Activated CD4-positive, alpha-beta memory T cell treated with anti-CD3 and anti-CD28 coated beads for 36 hours (primary cell): ENCODE measurements at regions of chr7 and their contacts with region 1.

Region 1: DNA sequence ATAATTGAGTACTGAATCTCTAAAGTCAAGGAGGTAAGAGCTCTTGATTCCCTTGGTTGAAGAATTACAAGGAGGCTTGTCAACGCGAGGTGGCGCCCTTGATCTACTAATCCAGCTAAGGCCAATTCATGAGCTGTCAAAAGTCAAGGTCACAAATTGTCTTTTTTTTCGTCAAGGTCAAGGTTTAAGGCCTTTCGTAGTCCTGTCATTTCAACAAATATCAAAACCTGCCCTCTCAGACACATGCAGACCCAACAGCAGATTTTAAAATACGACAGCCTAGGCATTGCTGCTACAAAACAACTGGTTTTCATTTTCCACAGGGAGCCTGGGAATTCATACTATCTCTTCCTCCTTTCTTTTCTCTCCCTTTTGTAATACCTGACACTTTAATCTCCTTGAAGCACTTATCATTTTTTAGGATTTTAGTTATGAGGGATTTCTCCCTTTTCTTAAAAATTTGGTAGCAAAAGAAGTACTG is 3.6 kb downstream of the HOXA13 start:
- DNase-seq: peak; percentile 88
- H3K4me3 Mint-ChIP-seq: peak overlapping the region; percentile 26
- H3K27ac Mint-ChIP-seq: no peak overlapping the region
- H3K4me1 Mint-ChIP-seq: peaks cover 30% of the 10 kb centered on the region
- H3K27me3 Mint-ChIP-seq: peaks cover 71% of the 10 kb centered on the region

Region 2: GRCh38 chr7:27080844-27081436 is 115.4 kb before region 1 on chr7:
- CTCF ChIA-PET with region 1: no interaction called
- POLR2A ChIA-PET with region 1: no interaction called
- intact Hi-C with region 1: no loop called
- DNase-seq: no peak
- H3K4me3 Mint-ChIP-seq: no peak overlapping the region
- H3K27ac Mint-ChIP-seq: no peak overlapping the region
- H3K4me1 Mint-ChIP-seq: no peaks in the 10 kb centered on the region
- H3K27me3 Mint-ChIP-seq: peaks cover 4% of the 10 kb centered on the region

Region 3: GRCh38 chr7:27166531-27167505 is 29.5 kb before region 1 on chr7:
- CTCF ChIA-PET with region 1: interaction called, 11 read pairs
- POLR2A ChIA-PET with region 1: no interaction called
- intact Hi-C with region 1: loop called (anchors 2 kb)
- DNase-seq: no peak
- H3K4me3 Mint-ChIP-seq: peak overlapping the region; percentile 47
- H3K27ac Mint-ChIP-seq: peak overlapping the region; percentile 16
- H3K4me1 Mint-ChIP-seq: peaks cover 27% of the 10 kb centered on the region
- H3K27me3 Mint-ChIP-seq: peaks cover 79% of the 10 kb centered on the region

Region 4: DNA sequence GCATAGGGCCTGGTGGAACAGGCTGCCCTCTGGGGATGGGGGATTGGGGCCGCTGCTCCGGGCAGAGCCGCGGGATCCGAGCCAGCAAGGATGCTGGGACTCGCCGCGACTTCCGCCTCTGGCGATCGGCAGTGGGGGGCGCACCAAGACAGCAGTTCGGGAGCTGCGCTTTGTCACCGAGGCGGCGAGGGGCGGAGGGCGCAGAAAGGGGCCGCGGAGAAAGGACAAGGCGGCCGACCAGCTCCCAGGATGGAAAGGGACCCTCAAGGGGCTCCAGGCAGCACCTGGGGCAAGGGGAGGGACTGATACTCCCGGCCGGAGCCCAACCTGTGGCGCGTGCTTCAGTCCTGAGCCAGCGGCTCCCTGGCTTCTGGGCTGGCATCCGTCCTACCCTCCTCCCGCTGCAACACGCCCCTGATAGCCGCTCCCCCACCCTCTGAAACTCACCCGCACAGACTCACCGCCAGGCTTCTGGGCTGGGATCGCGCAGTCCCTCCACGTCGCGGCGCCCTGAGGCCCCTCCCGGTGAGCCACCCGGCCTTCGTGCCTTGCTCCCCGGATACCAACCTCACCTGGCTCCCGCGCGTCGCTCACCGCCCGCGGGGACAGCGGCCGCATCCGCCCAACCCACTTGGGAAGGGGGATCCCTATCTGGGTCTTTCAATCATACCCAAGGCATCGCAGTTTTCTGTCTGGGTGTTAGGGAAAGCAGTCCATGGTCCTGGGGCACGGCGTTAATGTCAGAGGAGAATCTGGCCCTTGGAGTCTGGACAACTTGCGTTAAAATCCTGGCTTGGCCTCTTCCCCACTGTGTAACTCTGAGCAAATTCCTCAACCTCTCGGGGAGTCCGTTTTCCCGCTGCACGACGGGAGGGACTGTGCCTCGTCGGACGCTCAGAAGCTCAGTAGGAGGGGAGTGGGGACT is 39.3 kb after region 1 on chr7:
- CTCF ChIA-PET with region 1: interaction called, 19 read pairs
- POLR2A ChIA-PET with region 1: no interaction called
- intact Hi-C with region 1: loop called (anchors 2 kb)
- DNase-seq: peak; percentile 32
- H3K4me3 Mint-ChIP-seq: no peak overlapping the region
- H3K27ac Mint-ChIP-seq: no peak overlapping the region
- H3K4me1 Mint-ChIP-seq: peaks cover 11% of the 10 kb centered on the region
- H3K27me3 Mint-ChIP-seq: peaks cover 60% of the 10 kb centered on the region

Region 5: GRCh38 chr7:27576360-27576944 is 380.1 kb after region 1 on chr7:
- CTCF ChIA-PET with region 1: interaction called, 12 read pairs
- POLR2A ChIA-PET with region 1: no interaction called
- intact Hi-C with region 1: loop called (anchors 1 kb)
- DNase-seq: no peak
- H3K4me3 Mint-ChIP-seq: no peak overlapping the region
- H3K27ac Mint-ChIP-seq: no peak overlapping the region
- H3K4me1 Mint-ChIP-seq: no peaks in the 10 kb centered on the region
- H3K27me3 Mint-ChIP-seq: no peaks in the 10 kb centered on the region

Region 6: DNA sequence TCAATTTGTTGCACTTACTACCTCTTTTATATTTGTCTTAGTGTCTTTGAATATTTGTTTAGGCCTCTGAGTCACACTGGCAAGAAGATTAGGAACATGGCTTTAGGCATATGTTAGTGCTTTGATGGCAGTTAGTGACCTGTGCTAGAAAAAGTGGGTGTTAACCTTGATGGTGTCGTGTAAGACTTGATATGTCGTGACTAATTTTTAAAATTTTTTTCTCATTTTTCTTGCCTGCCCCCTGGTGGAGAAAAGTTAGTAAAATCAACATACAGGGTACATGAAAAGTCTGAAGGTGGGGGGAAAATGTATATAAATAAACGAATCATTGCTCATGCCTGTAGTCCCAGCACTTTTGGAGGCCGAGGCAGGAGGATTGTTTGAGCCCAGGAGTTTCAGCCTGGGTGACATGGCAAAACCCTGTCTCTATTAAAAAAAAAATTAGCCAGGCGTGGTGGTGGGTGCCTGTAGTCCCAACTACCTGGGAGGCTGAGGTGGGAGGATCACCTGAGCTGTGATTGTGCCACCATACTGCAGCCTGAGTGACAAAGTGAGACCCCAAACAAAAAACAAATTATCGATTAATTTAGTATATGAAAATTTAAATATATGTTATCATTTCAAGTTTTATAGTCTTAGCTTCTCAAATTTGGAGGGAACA is 588.2 kb after region 1 on chr7:
- CTCF ChIA-PET with region 1: interaction called, 6 read pairs
- POLR2A ChIA-PET with region 1: no interaction called
- intact Hi-C with region 1: loop called (anchors 5 kb)
- DNase-seq: no peak
- H3K4me3 Mint-ChIP-seq: no peak overlapping the region
- H3K27ac Mint-ChIP-seq: no peak overlapping the region
- H3K4me1 Mint-ChIP-seq: peaks cover 33% of the 10 kb centered on the region
- H3K27me3 Mint-ChIP-seq: no peaks in the 10 kb centered on the region

Region 7: DNA sequence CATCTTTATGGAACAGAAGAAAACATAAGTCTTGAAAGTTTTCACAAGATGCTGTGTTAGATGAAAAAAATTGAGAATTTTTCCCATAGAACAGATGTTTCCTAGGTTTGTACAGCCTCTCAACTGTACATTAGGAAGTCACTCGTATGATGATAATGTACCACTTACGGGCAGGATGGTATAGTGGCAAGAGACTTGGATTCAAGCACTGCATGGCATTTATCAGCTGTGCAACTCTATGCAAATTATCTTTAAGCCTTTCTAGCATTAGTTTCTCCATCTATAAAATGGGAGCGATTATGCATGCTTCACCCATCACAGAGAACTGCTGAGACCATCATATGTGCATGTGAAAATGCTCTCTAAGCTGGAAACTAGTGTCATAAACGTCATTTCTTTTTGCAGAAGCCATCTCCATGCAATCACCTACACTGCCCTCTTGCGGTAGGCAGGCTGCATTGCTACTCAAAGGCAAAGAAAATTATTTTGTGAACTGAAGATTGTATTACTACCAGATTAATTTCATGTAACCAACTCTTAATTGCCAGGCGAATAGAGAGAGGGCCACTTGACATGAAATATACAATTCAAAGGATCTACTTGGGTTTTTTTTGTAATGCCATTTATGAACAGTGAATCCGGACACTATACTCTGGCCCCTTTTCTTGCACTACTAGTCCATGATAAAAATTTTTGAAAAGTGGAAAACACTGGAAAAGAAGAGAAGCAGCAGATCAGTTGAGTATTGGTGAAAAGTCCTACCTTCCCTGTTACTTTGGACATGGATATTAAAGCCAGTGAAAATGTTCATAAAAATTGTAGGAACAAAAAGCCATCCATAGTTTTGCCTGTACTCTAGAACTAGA is 881.9 kb after region 1 on chr7:
- CTCF ChIA-PET with region 1: interaction called, 15 read pairs
- POLR2A ChIA-PET with region 1: no interaction called
- intact Hi-C with region 1: loop called (anchors 2 kb)
- DNase-seq: peak; percentile 60
- H3K4me3 Mint-ChIP-seq: no peak overlapping the region
- H3K27ac Mint-ChIP-seq: no peak overlapping the region
- H3K4me1 Mint-ChIP-seq: peaks cover 5% of the 10 kb centered on the region
- H3K27me3 Mint-ChIP-seq: no peaks in the 10 kb centered on the region